WTC11 (cell line): ENCODE measurements at regions of chr10 and their contacts with region 1.

Region 1: DNA sequence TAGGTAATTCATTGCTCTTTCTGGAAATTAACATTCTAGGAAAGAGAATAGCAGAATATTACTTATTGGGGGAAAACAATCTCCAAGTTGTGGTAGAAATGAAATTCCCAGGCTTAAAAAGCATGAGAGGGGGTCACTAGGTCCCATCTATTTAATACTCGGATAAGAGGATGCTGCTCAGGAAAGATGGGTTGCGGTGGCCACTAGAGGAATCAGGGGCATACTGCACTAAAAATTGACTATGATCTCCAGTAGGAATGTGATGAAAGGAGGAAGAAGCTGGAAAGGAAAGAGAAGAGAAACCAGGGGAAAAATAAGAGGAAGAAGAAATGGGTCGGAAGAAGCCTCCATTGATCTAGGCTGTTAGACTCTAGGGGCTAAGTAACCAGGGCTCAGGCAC is 192.8 kb downstream of the GPAM start:
- DNase-seq: peak; percentile 28
- ATAC-seq: peak; percentile 89
- H3K4me3 Mint-ChIP-seq: no peak overlapping the region
- H3K27ac Mint-ChIP-seq: no peak overlapping the region
- H3K4me1 Mint-ChIP-seq: peaks cover 3% of the 10 kb centered on the region
- H3K27me3 Mint-ChIP-seq: no peaks in the 10 kb centered on the region; the same call in 1 of the 2 replicates
- CTCF ChIP-seq: no peak

Region 2: GRCh38 chr10:111756217-111757061 is 234.3 kb before region 1 on chr10:
- CTCF ChIA-PET with region 1: interaction called, 15 read pairs
- POLR2A ChIA-PET with region 1: no interaction called
- DNase-seq: peak; percentile 74
- ATAC-seq: peak; percentile 99
- H3K4me3 Mint-ChIP-seq: no peak overlapping the region
- H3K27ac Mint-ChIP-seq: no peak overlapping the region
- H3K4me1 Mint-ChIP-seq: peaks cover 10% of the 10 kb centered on the region
- H3K27me3 Mint-ChIP-seq: peaks cover 11% of the 10 kb centered on the region
- CTCF ChIP-seq: peak; percentile 23; the same call in 1 of the 2 replicates